Activated B cell treated with CpG ODN at 0.5 μM for 24 hours (primary cell): ENCODE measurements at regions of chr4 and their contacts with region 1.

Region 1: GRCh38 chr4:140720387-140721304 is 35.5 kb downstream of the TBC1D9 start:
- DNase-seq: peak; percentile 40
- ATAC-seq: peak; percentile 56
- H3K4me3 Mint-ChIP-seq: peak overlapping the region; percentile 84
- H3K27ac Mint-ChIP-seq: peak overlapping the region; percentile 98
- H3K4me1 Mint-ChIP-seq: peaks cover 89% of the 10 kb centered on the region
- H3K27me3 Mint-ChIP-seq: no peaks in the 10 kb centered on the region
- CTCF ChIP-seq: no peak

Region 2: DNA sequence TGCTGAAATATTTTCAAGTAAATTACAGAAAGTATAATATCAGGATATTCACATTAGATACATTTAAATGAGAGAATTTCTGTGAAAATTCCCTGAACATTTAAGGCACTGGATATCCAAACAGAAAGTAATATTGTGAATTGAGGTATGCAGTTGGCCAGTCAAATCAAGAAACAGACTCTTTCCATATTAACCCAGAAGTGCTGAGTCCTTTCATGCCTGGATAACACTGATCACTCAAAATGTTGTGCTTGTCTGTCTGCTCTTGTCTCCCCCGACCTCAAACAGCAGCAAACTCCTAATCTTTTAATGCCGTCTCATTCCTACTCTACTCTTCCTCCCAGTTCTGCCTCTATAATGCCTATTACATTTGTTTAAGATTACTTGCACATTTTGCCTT is 15.7 kb before region 1 on chr4:
- CTCF ChIA-PET with region 1: no interaction called
- POLR2A ChIA-PET with region 1: interaction called, 7 read pairs
- intact Hi-C with region 1: loop called (anchors 2 kb)
- DNase-seq: no peak
- ATAC-seq: peak; percentile 58
- H3K4me3 Mint-ChIP-seq: peak overlapping the region; percentile 9
- H3K27ac Mint-ChIP-seq: peak overlapping the region; percentile 79
- H3K4me1 Mint-ChIP-seq: peaks cover 59% of the 10 kb centered on the region
- H3K27me3 Mint-ChIP-seq: no peaks in the 10 kb centered on the region
- CTCF ChIP-seq: no peak

Region 3: DNA sequence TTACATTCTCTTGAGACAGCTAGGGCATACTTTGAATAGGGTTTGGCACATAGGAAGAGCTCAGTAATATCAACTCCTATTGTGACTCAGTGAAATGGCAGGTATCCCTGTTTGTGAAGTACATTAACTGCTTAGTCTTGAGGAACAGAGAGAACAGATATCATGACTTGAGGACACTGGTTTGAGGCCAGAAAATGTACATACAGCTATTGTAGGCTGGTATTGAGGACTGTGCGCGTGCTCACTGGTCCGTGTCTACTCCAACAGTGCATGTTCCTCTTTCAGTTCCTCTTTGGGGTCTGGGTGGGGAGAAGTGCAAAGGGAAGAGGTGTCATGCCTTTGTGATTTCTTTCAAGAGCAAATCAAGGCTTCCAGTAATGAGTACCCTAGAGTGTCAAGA is 70.1 kb after region 1 on chr4:
- CTCF ChIA-PET with region 1: interaction called, 4 read pairs
- POLR2A ChIA-PET with region 1: interaction called, 28 read pairs
- intact Hi-C with region 1: loop called (anchors 1 kb)
- DNase-seq: peak; percentile 67
- ATAC-seq: peak; percentile 93
- H3K4me3 Mint-ChIP-seq: peak overlapping the region; percentile 48
- H3K27ac Mint-ChIP-seq: peak overlapping the region; percentile 71
- H3K4me1 Mint-ChIP-seq: peaks cover 76% of the 10 kb centered on the region
- H3K27me3 Mint-ChIP-seq: no peaks in the 10 kb centered on the region
- CTCF ChIP-seq: no peak

Region 4: GRCh38 chr4:140800666-140801065 is 80.0 kb after region 1 on chr4:
- CTCF ChIA-PET with region 1: no interaction called
- POLR2A ChIA-PET with region 1: interaction called, 12 read pairs
- intact Hi-C with region 1: no loop called
- DNase-seq: no peak
- ATAC-seq: peak; percentile 70
- H3K4me3 Mint-ChIP-seq: peak overlapping the region; percentile 56
- H3K27ac Mint-ChIP-seq: peak overlapping the region; percentile 79
- H3K4me1 Mint-ChIP-seq: peaks cover 87% of the 10 kb centered on the region
- H3K27me3 Mint-ChIP-seq: no peaks in the 10 kb centered on the region
- CTCF ChIP-seq: no peak

Region 5: GRCh38 chr4:140807491-140808252 is 87.0 kb after region 1 on chr4:
- CTCF ChIA-PET with region 1: no interaction called
- POLR2A ChIA-PET with region 1: interaction called, 10 read pairs
- intact Hi-C with region 1: loop called (anchors 1 kb)
- DNase-seq: no peak
- ATAC-seq: peak; percentile 78
- H3K4me3 Mint-ChIP-seq: peak overlapping the region; percentile 72
- H3K27ac Mint-ChIP-seq: peak overlapping the region; percentile 93
- H3K4me1 Mint-ChIP-seq: peaks cover 89% of the 10 kb centered on the region
- H3K27me3 Mint-ChIP-seq: no peaks in the 10 kb centered on the region
- CTCF ChIP-seq: no peak